Right lobe of liver (tissue), 6 donors: ENCODE measurements at regions of chr6 and their contacts with region 1.

Region 1: DNA sequence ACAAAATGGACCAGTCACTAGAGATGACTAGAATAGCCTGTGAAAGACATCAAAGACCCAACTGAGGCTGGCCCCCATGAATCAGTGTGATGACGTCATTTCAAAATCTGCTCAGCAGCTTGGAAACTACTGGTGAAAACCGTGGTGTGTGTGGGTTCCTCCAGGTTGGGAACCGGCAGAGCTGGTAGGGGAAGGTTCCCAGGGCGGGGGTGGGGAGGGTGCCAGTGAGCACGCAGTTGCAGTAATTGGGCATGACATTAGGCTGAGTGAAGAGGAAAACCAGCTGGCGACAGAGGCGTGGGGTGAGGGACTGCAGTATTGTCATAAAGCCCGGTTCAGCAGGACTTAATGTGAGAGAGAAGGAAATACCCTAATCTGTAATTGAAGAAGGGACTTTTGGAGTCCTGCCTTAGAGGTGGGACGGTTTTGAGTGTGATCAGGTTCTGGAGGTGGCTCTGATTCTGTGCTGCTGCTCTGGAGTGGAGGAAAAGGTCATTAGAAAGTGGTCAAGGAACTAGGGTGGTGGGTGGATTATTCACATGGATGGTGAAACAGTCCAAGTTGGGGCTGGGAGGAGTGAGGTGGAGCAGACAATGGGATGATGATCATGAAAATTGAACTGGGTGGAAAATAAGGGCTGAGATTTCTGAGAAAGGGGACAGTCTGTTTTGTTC is 52.0 kb upstream of the MTHFD1L start:
- DNase-seq: no peak
- ATAC-seq: no peak
- H3K4me3 ChIP-seq: no peak overlapping the region
- H3K27ac ChIP-seq: no peak overlapping the region
- H3K4me1 ChIP-seq: no peaks in the 10 kb centered on the region
- H3K27me3 ChIP-seq: no peaks in the 10 kb centered on the region
- CTCF ChIP-seq: no peak
- POLR2A ChIP-seq: no peak

Region 2: DNA sequence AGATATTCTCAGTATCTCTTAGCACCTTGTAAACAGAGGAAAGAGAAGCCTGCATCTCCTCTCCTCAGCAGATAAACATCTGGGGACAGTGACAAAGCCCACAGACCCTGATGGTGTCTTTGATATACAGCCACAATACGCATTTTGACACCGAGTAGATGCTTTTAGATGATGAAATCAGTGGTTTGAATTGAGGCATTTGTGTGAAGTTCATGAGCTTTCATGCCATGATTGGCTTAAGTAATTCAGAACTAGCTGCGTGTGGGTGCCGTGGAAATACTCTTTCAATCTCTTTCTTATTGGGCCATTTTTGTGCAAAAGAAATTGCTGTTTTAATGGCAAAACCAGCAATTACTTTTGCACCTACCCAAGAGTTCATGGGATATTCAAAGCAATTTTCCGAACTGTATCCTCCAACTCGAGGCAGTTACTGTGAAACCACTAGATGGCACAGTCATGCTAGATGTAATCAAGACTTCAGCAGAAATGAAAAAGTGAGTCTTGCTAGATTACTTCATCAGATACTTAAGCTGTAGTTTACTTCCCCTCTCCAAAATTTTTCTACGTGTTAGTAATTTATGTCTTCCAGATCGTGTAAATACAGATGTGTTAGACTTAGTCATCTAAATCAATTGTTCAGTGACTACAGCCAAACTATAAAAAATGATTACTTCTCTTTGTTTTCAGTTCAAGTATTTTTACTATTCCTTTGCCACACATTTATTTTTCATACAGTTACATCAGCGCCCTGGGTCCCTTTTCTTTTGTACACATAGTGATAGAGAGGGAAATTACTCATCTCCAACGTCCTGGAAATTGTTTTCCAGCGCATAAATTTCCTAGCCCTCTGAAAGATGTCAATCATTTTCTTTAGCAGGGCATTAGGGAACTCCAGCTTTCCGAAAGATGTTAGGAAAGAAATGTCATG is 395.3 kb before region 1 on chr6:
- intact Hi-C with region 1: loop called (anchors 5 to 10 kb)
- DNase-seq: no peak
- ATAC-seq: peak; percentile 85 to 92 (median 90)
- H3K4me3 ChIP-seq: peak overlapping the region; percentile 16 to 46 (median 39)
- H3K27ac ChIP-seq: peak overlapping the region; percentile 26 to 60 (median 41)
- H3K4me1 ChIP-seq: peaks cover 0 to 5% (median 0%) of the 10 kb centered on the region in 4 donors
- H3K27me3 ChIP-seq: no peaks in the 10 kb centered on the region
- CTCF ChIP-seq: peak; percentile 80 to 89 (median 84)
- POLR2A ChIP-seq: no peak